ENCODE measurements at regions of chr2 and their contacts with region 1.

Region 1: DNA sequence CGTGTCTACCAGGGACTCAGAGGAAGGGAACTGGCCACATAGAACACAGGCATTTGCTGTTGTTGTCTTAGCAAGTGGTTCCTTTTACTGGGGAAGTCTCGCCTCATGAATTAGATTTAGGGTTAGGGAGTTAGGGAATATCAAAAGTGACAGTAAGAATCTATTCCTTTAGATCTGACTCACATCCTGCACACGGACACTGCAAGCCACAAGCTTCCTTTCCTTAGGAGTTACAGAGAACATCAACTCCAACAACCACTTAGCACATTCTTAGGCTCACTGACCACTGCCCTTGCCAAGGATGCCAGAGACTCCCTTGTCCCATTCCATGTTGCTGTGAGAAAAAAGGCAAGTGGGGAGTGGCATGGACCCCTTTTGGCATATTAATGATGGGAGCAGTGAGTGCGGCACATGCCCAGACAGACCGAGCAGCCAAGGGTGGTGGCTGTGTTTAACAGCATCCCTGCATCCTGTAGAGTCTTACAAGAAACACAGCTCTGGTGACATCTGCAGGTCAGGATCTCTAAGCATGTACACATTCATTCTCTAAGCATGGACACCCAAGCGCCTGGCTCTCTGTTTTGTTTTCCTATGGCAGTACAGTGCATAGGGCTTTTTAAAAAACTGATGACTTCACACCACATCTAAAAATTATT is 745.6 kb upstream of the RAB6C start:
- DNase-seq: no peak
- ATAC-seq: peak in 4 of 8 donors; percentile 41 to 73 (median 66)
- H3K4me3 ChIP-seq: no peak overlapping the region
- H3K27ac ChIP-seq: no peak overlapping the region
- H3K4me1 ChIP-seq: no peaks in the 10 kb centered on the region
- H3K27me3 ChIP-seq: peaks cover 0 to 9% (median 0%) of the 10 kb centered on the region in 7 donors
- CTCF ChIP-seq: peak in 5 of 9 donors; percentile 9 to 33 (median 15)

Region 2: GRCh38 chr2:128404709-128405466 is 829.0 kb before region 1 on chr2:
- intact Hi-C with region 1: loop called in 1 of 10 experiments (anchors 5 kb)
- DNase-seq: no peak
- ATAC-seq: no peak
- H3K4me3 ChIP-seq: no peak overlapping the region
- H3K27ac ChIP-seq: no peak overlapping the region
- H3K4me1 ChIP-seq: no peaks in the 10 kb centered on the region
- H3K27me3 ChIP-seq: peaks cover 0 to 5% (median 0%) of the 10 kb centered on the region in 7 donors
- CTCF ChIP-seq: no peak

Region 3: GRCh38 chr2:128949360-128949759 is 284.5 kb before region 1 on chr2:
- intact Hi-C with region 1: no loop called
- DNase-seq: no peak
- ATAC-seq: no peak
- H3K4me3 ChIP-seq: no peak overlapping the region
- H3K27ac ChIP-seq: no peak overlapping the region
- H3K4me1 ChIP-seq: no peaks in the 10 kb centered on the region
- H3K27me3 ChIP-seq: peaks cover 0 to 10% (median 0%) of the 10 kb centered on the region in 7 donors
- CTCF ChIP-seq: no peak